IMR-90 (cell line): ENCODE measurements at regions of chr19 and their contacts with region 1.

Region 1: DNA sequence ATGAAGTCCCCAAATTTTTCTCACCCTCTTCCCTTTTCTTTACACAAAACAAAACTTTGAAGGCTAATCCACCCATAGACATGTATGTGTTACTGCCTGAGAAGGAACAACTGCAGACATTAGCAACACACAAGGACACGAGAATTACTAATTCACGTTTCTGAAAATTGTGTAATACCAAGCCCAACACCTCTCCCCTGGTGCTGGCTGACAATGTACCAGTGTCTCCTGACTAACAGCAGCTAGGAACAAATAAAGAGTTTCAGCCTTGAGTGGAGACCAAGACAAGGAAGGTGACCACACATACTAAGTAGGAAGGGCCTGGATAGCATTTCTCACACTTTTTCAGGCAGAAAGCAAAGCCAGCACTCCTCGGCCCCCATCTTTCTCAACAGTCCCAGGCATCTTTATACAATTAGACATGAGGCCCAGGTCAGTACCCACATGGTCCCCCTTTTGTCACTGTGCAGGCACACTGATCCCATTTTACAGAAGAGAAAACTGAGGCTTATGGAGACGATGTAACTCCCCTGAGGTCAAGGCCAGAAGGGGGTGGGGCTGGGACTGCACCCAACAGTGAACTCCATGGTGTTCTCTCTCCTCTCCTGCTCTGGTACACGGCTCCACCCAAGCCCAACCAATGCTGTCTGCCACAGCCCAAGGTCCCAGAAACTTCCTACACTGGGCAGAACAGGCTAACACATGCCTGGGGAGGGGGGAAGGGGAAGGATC is 8.7 kb downstream of the BRD4 start:
- DNase-seq: peak; percentile 53
- ATAC-seq: peak; percentile 13; the same call in 1 of the 2 replicates
- H3K4me3 ChIP-seq: no peak overlapping the region
- H3K27ac ChIP-seq: no peak overlapping the region; the same call in 1 of the 2 replicates
- H3K4me1 ChIP-seq: peaks cover 44% of the 10 kb centered on the region
- H3K27me3 ChIP-seq: no peaks in the 10 kb centered on the region
- CTCF ChIP-seq: no peak
- POLR2A ChIP-seq: no peak
- RAD21 ChIP-seq: no peak

Region 2: GRCh38 chr19:15280915-15281683 is 42.6 kb before region 1 on chr19:
- CTCF ChIA-PET with region 1: no interaction called
- POLR2A ChIA-PET with region 1: no interaction called
- dilution Hi-C with region 1: no loop called
- in situ Hi-C with region 1: no loop called
- intact Hi-C with region 1: loop called (anchors 5 kb)
- DNase-seq: peak; percentile 89
- ATAC-seq: peak; percentile 84
- H3K4me3 ChIP-seq: no peak overlapping the region
- H3K27ac ChIP-seq: peak overlapping the region; percentile 51; the same call in 1 of the 2 replicates
- H3K4me1 ChIP-seq: peaks cover 50% of the 10 kb centered on the region
- H3K27me3 ChIP-seq: no peaks in the 10 kb centered on the region
- CTCF ChIP-seq: peak; percentile 42
- POLR2A ChIP-seq: no peak
- RAD21 ChIP-seq: peak; percentile 45

Region 3: DNA sequence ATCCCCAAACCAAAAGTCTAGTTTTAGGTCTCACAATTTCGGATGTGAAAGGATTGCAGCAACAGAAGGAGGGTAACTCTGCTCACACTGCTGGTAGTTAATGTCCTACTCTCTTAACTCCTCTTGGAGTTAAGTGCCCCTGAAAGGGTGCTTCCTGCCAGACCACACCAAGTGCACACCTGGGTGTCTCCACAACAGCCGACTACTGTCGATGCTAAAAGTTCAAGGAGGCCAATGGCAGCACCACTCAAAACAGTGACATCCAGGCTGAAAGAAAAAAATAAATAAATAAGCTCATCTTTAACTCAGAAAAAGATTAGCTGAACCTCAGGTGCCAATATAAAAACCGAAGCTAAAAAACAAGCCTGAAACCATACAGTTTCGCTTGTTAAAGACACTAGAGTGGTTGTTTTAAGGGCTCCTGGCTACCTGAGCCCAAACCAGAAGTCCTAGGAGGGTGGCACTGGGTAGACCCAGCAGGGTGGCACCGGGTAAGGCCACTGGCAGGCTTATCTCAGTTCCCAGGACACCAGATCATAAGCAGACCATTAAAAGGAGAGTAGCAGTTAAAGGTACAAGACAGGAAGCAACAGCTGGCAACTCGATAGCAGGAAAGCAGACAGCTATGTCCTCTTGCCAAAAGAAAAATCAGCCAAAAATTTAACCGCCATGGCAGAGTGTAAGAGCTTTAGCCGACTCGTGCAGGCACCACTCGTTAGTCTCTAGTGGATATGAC is 30.6 kb before region 1 on chr19:
- CTCF ChIA-PET with region 1: no interaction called
- POLR2A ChIA-PET with region 1: no interaction called
- dilution Hi-C with region 1: no loop called
- in situ Hi-C with region 1: no loop called
- intact Hi-C with region 1: loop called (anchors 5 kb)
- DNase-seq: no peak
- ATAC-seq: no peak
- H3K4me3 ChIP-seq: no peak overlapping the region
- H3K27ac ChIP-seq: peak overlapping the region; percentile 69
- H3K4me1 ChIP-seq: peaks cover 57% of the 10 kb centered on the region
- H3K27me3 ChIP-seq: no peaks in the 10 kb centered on the region
- CTCF ChIP-seq: no peak
- POLR2A ChIP-seq: no peak
- RAD21 ChIP-seq: no peak